ENCODE measurements at regions of chr5 and their contacts with region 1.

Region 1: DNA sequence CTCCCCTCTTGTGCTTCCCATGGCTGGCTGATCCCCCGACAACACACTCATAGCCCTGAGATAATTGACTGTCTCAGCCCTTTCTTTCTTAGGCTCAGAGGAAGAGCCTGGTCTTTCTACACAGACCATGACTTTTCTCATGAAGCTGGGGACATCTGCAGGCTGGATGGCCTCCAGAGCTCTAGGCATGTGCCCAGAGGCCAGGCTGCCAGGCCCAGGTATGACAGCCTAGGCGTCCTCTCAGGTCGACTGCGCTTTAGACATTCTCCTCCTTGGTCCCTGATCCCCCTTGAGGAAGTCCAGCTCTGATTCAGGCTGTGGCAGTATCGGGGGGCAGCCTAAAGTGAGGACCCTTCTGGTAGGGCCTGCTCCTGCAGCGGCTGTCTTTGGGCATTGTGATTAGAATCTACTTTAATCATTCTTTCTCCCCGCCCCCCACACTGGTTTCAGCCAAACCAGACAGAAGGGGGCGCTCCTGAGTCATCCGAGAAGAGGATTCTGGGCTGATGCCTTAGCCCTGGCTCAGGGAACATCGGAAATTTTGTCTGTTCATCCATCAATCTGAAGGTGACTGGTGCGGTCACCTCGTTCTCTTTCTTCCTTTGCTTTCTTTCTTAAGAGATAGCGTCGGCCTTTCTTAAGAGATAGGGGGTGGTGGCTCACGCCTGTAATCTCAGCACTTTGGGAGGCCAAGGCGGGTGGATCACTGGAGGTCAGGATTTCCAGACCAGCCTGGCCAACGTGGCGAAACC is 66.5 kb upstream of the HSPA9 start:
- DNase-seq: peak; percentile 45 to 80
- H3K4me3 ChIP-seq: no peak overlapping the region
- H3K27ac ChIP-seq: no peak overlapping the region
- H3K4me1 ChIP-seq: no peaks in the 10 kb centered on the region
- H3K27me3 ChIP-seq: no peaks in the 10 kb centered on the region
- CTCF ChIP-seq: peak; percentile 94

Region 2: GRCh38 chr5:138470322-138471193 is 171.2 kb before region 1 on chr5:
- CTCF ChIA-PET with region 1: no interaction called
- POLR2A ChIA-PET with region 1: no interaction called
- intact Hi-C with region 1: no loop called
- DNase-seq: peak; percentile 33 to 38
- H3K4me3 ChIP-seq: no peak overlapping the region
- H3K27ac ChIP-seq: no peak overlapping the region
- H3K4me1 ChIP-seq: no peaks in the 10 kb centered on the region
- H3K27me3 ChIP-seq: no peaks in the 10 kb centered on the region
- CTCF ChIP-seq: no peak

Region 3: DNA sequence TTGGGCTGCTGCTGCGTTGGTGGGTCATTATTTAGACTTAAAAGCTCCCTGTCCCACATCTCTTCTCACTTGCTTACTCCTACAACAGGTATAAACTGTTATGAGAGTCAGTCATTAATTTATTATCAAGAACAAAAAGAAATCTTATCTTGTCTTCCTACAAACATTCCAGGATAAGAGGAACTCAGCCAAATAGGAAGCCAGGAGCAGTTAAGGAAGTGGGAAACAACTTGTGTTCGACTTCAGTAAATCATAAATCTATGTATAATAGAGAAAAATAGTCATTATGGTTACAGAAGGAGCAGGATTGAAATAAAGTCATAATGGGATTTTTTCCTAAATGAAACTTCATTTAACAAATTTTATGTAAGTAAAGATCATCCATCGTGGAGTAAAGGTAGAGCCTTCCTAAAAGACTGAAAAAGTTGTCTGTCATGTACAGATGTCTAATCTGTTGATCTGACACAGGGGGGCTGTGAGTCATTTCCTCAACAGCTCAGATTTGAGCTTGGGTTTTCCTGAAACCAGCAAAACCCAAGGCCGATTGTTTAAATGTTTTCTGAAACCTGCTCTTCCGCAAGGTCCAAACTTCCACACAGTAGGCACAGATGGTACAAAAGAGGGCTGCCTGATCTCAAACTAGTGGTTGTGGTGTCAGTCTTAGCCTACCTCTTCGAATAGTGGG is 258.7 kb after region 1 on chr5:
- CTCF ChIA-PET with region 1: no interaction called
- POLR2A ChIA-PET with region 1: no interaction called
- intact Hi-C with region 1: loop called (anchors 10 kb)
- DNase-seq: peak in 1 of 2 experiments; percentile 6
- H3K4me3 ChIP-seq: no peak overlapping the region
- H3K27ac ChIP-seq: peak overlapping the region; percentile 46
- H3K4me1 ChIP-seq: peaks cover 19% of the 10 kb centered on the region
- H3K27me3 ChIP-seq: no peaks in the 10 kb centered on the region
- CTCF ChIP-seq: no peak

Region 4: DNA sequence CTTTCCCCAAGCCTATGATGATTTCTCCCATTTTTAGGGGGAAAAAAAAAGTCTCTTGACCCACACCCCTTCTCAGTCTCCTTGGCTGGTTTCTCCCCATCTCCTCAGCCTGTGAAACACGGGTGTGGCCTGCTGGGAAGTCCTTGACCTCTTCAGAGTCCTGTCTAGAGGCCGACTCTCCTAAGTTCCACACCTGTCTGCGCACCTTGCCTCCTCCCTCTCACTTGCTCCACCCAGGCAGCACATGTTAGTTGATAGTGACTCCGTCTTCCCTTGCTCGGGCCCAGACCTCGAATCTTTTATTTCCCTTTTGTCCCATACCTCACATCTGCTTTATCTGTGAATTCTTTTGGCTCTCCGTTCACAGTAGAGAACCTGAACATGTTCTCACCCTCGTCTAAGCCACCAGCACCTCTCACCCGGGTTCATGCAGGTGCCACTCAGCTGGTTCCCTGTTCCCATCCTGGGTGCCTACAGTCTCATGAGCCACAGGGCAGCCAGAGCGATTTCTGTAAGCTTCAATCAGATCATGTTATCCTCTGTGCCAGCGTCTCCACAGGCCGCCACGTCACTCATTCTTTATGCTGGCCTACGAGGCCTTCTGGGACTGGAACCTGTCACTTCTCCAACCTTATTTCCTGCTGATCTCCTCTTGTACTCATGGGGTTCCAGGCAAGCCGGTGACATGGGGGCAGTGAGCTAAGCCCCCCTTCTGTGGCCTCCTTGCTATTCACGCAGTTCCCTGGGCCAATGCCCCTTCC is 285.1 kb after region 1 on chr5:
- CTCF ChIA-PET with region 1: no interaction called
- POLR2A ChIA-PET with region 1: no interaction called
- intact Hi-C with region 1: loop called (anchors 2 kb)
- DNase-seq: no peak
- H3K4me3 ChIP-seq: no peak overlapping the region
- H3K27ac ChIP-seq: no peak overlapping the region
- H3K4me1 ChIP-seq: no peaks in the 10 kb centered on the region
- H3K27me3 ChIP-seq: no peaks in the 10 kb centered on the region
- CTCF ChIP-seq: no peak

Region 5: GRCh38 chr5:139262742-139263445 is 621.2 kb after region 1 on chr5:
- CTCF ChIA-PET with region 1: no interaction called
- POLR2A ChIA-PET with region 1: no interaction called
- intact Hi-C with region 1: loop called (anchors 1 kb)
- DNase-seq: peak; percentile 73 to 80
- H3K4me3 ChIP-seq: no peak overlapping the region
- H3K27ac ChIP-seq: no peak overlapping the region
- H3K4me1 ChIP-seq: no peaks in the 10 kb centered on the region
- H3K27me3 ChIP-seq: peaks cover 6% of the 10 kb centered on the region; the same call in 1 of the 2 replicates
- CTCF ChIP-seq: peak; percentile 83